ENCODE measurements at regions of chr1 and their contacts with region 1.

Region 1: GRCh38 chr1:214551436-214552173 is at the start of gene PTPN14:
- DNase-seq: peak; percentile 96
- H3K4me3 ChIP-seq: peak within 1 kb of the TSS; percentile 94
- H3K4me3 Mint-ChIP-seq: peak within 1 kb of the TSS; percentile 81
- H3K27ac Mint-ChIP-seq: peak within 1 kb of the TSS; percentile 97
- H3K4me1 ChIP-seq: peaks cover 50% of the 10 kb centered on the region
- H3K4me1 Mint-ChIP-seq: peaks cover 36% of the 10 kb centered on the region
- H3K27me3 ChIP-seq: no peaks in the 10 kb centered on the region
- H3K27me3 Mint-ChIP-seq: no peaks in the 10 kb centered on the region
- CTCF ChIP-seq: peak; percentile 36 to 50
- total RNA-seq, gene PTPN14: 103 and 108 TPM in 2 replicates

Region 2: GRCh38 chr1:214102907-214103306 is 448.7 kb before region 1 on chr1:
- CTCF ChIA-PET with region 1: no interaction called
- POLR2A ChIA-PET with region 1: no interaction called
- intact Hi-C with region 1: no loop called
- DNase-seq: no peak
- H3K4me3 ChIP-seq: no peak overlapping the region
- H3K4me3 Mint-ChIP-seq: no peak overlapping the region
- H3K27ac Mint-ChIP-seq: no peak overlapping the region
- H3K4me1 ChIP-seq: peaks cover 11% of the 10 kb centered on the region
- H3K4me1 Mint-ChIP-seq: no peaks in the 10 kb centered on the region
- H3K27me3 ChIP-seq: no peaks in the 10 kb centered on the region
- H3K27me3 Mint-ChIP-seq: no peaks in the 10 kb centered on the region
- CTCF ChIP-seq: no peak

Region 3: GRCh38 chr1:214328770-214329469 is 222.7 kb before region 1 on chr1:
- CTCF ChIA-PET with region 1: interaction called, 11 read pairs
- POLR2A ChIA-PET with region 1: interaction called, 3 read pairs
- intact Hi-C with region 1: no loop called
- DNase-seq: peak; percentile 86 to 88
- H3K4me3 ChIP-seq: no peak overlapping the region
- H3K4me3 Mint-ChIP-seq: peak overlapping the region; percentile 44
- H3K27ac Mint-ChIP-seq: peak overlapping the region; percentile 63
- H3K4me1 ChIP-seq: peaks cover 32% of the 10 kb centered on the region
- H3K4me1 Mint-ChIP-seq: peaks cover 55% of the 10 kb centered on the region
- H3K27me3 ChIP-seq: no peaks in the 10 kb centered on the region
- H3K27me3 Mint-ChIP-seq: no peaks in the 10 kb centered on the region
- CTCF ChIP-seq: peak; percentile 93

Region 4: GRCh38 chr1:214414691-214415090 is 136.9 kb before region 1 on chr1:
- CTCF ChIA-PET with region 1: no interaction called
- POLR2A ChIA-PET with region 1: interaction called, 8 read pairs
- intact Hi-C with region 1: loop called (anchors 1 kb)
- DNase-seq: peak; percentile 76 to 77
- H3K4me3 ChIP-seq: no peak overlapping the region
- H3K4me3 Mint-ChIP-seq: peak overlapping the region; percentile 34
- H3K27ac Mint-ChIP-seq: peak overlapping the region; percentile 75
- H3K4me1 ChIP-seq: peaks cover 51% of the 10 kb centered on the region
- H3K4me1 Mint-ChIP-seq: peaks cover 34% of the 10 kb centered on the region
- H3K27me3 ChIP-seq: no peaks in the 10 kb centered on the region
- H3K27me3 Mint-ChIP-seq: no peaks in the 10 kb centered on the region
- CTCF ChIP-seq: no peak

Region 5: GRCh38 chr1:214432245-214432644 is 119.4 kb before region 1 on chr1:
- CTCF ChIA-PET with region 1: no interaction called
- POLR2A ChIA-PET with region 1: no interaction called
- intact Hi-C with region 1: no loop called
- DNase-seq: no peak
- H3K4me3 ChIP-seq: no peak overlapping the region
- H3K4me3 Mint-ChIP-seq: no peak overlapping the region
- H3K27ac Mint-ChIP-seq: no peak overlapping the region
- H3K4me1 ChIP-seq: peaks cover 10% of the 10 kb centered on the region; the same call in 1 of the 2 replicates
- H3K4me1 Mint-ChIP-seq: peaks cover 39% of the 10 kb centered on the region
- H3K27me3 ChIP-seq: no peaks in the 10 kb centered on the region
- H3K27me3 Mint-ChIP-seq: no peaks in the 10 kb centered on the region
- CTCF ChIP-seq: no peak

Region 6: GRCh38 chr1:214466403-214467077 is 85.1 kb before region 1 on chr1:
- CTCF ChIA-PET with region 1: no interaction called
- POLR2A ChIA-PET with region 1: interaction called, 12 read pairs
- intact Hi-C with region 1: loop called (anchors 5 kb)
- DNase-seq: peak in 1 of 2 experiments; percentile 33
- H3K4me3 ChIP-seq: no peak overlapping the region
- H3K4me3 Mint-ChIP-seq: peak overlapping the region; percentile 29
- H3K27ac Mint-ChIP-seq: peak overlapping the region; percentile 77
- H3K4me1 ChIP-seq: peaks cover 32% of the 10 kb centered on the region
- H3K4me1 Mint-ChIP-seq: peaks cover 57% of the 10 kb centered on the region
- H3K27me3 ChIP-seq: no peaks in the 10 kb centered on the region
- H3K27me3 Mint-ChIP-seq: no peaks in the 10 kb centered on the region
- CTCF ChIP-seq: no peak

Region 7: DNA sequence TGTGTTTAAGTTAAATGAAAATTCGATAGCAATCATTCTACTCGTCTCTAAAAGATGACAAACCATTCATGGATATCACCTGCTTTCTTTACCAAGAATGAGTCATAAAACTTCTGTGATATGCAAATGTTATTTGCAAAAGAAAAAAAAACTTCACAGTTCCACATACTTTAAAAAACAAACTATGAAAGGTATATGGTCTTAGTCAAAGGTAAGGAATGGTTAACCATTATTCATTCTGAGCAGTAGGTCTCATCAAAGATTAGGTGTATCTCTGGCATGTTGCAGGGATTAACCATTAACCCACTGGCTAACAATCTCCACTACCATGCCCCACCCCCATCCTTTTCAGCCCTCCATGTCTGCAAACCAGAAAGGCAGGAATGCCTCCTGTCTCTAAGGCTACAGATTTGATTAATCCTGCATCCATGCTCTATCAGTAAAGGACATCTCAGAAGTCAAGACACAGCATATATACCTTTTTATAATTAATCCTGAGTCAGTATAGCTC is 44.6 kb before region 1 on chr1:
- CTCF ChIA-PET with region 1: interaction called, 4 read pairs
- POLR2A ChIA-PET with region 1: interaction called, 18 read pairs
- intact Hi-C with region 1: loop called (anchors 1 kb)
- DNase-seq: peak; percentile 97
- H3K4me3 ChIP-seq: peak overlapping the region; percentile 34
- H3K4me3 Mint-ChIP-seq: peak overlapping the region; percentile 65
- H3K27ac Mint-ChIP-seq: peak overlapping the region; percentile 92
- H3K4me1 ChIP-seq: peaks cover 59% of the 10 kb centered on the region
- H3K4me1 Mint-ChIP-seq: peaks cover 47% of the 10 kb centered on the region
- H3K27me3 ChIP-seq: no peaks in the 10 kb centered on the region
- H3K27me3 Mint-ChIP-seq: no peaks in the 10 kb centered on the region
- CTCF ChIP-seq: no peak

Region 8: GRCh38 chr1:214537219-214537618 is 14.4 kb before region 1 on chr1:
- CTCF ChIA-PET with region 1: no interaction called
- POLR2A ChIA-PET with region 1: interaction called, 10 read pairs
- intact Hi-C with region 1: no loop called
- DNase-seq: no peak
- H3K4me3 ChIP-seq: no peak overlapping the region
- H3K4me3 Mint-ChIP-seq: no peak overlapping the region
- H3K27ac Mint-ChIP-seq: no peak overlapping the region
- H3K4me1 ChIP-seq: peaks cover 3% of the 10 kb centered on the region; the same call in 1 of the 2 replicates
- H3K4me1 Mint-ChIP-seq: peaks cover 33% of the 10 kb centered on the region
- H3K27me3 ChIP-seq: no peaks in the 10 kb centered on the region
- H3K27me3 Mint-ChIP-seq: no peaks in the 10 kb centered on the region
- CTCF ChIP-seq: no peak